H1 (cell line): ENCODE measurements at regions of chr20 and their contacts with region 1.

Region 1: GRCh38 chr20:33897313-33897912 is 86.3 kb downstream of the CHMP4B start:
- DNase-seq: no peak
- H3K4me3 ChIP-seq: no peak overlapping the region
- H3K27ac ChIP-seq: no peak overlapping the region
- H3K4me1 ChIP-seq: peaks cover 0 to 1% (median 0%) of the 10 kb centered on the region in 4 experiments; a peak in 2 of 7 replicates
- H3K27me3 ChIP-seq: no peaks in the 10 kb centered on the region
- CTCF ChIP-seq: peak; percentile 20 to 43 (median 42); a peak in 3 of 4 replicates
- EP300 ChIP-seq: no peak
- POLR2A ChIP-seq: no peak
- RAD21 ChIP-seq: 0 out of 4 replicates have a peak, but pooled peaks of 1 of the 2 experiments have one; percentile 3

Region 2: GRCh38 chr20:33874129-33874528 is 23.3 kb before region 1 on chr20:
- CTCF ChIA-PET with region 1: interaction called, 17 read pairs
- POLR2A ChIA-PET with region 1: no interaction called
- DNase-seq: no peak
- H3K4me3 ChIP-seq: no peak overlapping the region
- H3K27ac ChIP-seq: no peak overlapping the region
- H3K4me1 ChIP-seq: no peaks in the 10 kb centered on the region
- H3K27me3 ChIP-seq: no peaks in the 10 kb centered on the region
- CTCF ChIP-seq: no peak
- EP300 ChIP-seq: no peak
- POLR2A ChIP-seq: no peak
- RAD21 ChIP-seq: no peak

Region 3: GRCh38 chr20:33883164-33883563 is 14.2 kb before region 1 on chr20:
- CTCF ChIA-PET with region 1: interaction called, 17 read pairs
- POLR2A ChIA-PET with region 1: no interaction called
- DNase-seq: no peak
- H3K4me3 ChIP-seq: no peak overlapping the region
- H3K27ac ChIP-seq: no peak overlapping the region
- H3K4me1 ChIP-seq: no peaks in the 10 kb centered on the region
- H3K27me3 ChIP-seq: no peaks in the 10 kb centered on the region; a peak in 1 of 7 replicates
- CTCF ChIP-seq: no peak
- EP300 ChIP-seq: no peak
- POLR2A ChIP-seq: no peak
- RAD21 ChIP-seq: no peak

Region 4: DNA sequence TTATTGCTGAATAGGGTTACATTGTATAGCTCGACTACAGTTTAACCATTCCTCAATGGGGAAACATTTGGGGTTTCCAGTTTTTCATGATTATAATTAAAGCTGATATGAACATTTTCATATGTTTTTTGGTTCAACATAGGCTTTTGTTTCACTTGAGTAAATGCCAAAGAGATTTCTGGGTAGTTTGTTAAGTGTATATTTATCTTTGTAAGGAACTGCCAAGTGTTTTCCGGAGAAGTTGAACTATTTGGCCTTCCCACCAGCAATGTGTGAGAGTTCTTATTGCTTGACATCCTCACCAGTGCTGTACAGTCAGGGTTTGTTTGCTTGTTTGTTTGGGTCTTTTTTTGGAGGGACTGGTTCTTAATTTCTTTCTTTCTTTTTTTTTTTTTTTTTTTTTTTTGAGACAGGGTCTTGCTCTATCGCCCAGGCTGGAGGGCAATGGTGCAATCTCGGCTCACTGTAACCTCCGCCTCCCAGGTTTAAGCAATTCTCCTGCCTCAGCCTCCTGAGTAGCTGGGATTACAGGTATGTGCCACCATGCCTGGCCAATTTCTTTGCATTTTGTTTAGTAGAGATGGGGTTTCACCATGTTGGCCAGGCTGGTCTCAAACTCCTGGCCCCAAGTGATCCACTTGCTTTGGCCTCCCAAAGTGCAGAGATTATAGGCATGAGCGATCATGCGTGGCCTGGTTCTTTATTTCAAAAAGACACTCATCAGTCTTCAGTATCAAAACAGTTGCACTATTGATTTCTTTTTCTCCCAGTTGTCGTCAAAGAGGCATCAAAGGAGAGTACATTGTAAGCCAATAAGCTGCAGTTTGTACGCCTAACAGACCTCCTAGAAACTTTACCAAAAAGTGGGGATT is 12.9 kb after region 1 on chr20:
- CTCF ChIA-PET with region 1: interaction called, 24 read pairs
- POLR2A ChIA-PET with region 1: interaction called, 3 read pairs
- DNase-seq: no peak
- H3K4me3 ChIP-seq: no peak overlapping the region
- H3K27ac ChIP-seq: no peak overlapping the region
- H3K4me1 ChIP-seq: no peaks in the 10 kb centered on the region
- H3K27me3 ChIP-seq: no peaks in the 10 kb centered on the region
- CTCF ChIP-seq: no peak
- EP300 ChIP-seq: no peak
- POLR2A ChIP-seq: no peak
- RAD21 ChIP-seq: no peak

Region 5: GRCh38 chr20:33915726-33916331 is 18.4 kb after region 1 on chr20:
- CTCF ChIA-PET with region 1: interaction called, 24 read pairs
- POLR2A ChIA-PET with region 1: no interaction called
- DNase-seq: peak in 1 of 2 experiments; percentile 85
- H3K4me3 ChIP-seq: no peak overlapping the region
- H3K27ac ChIP-seq: no peak overlapping the region
- H3K4me1 ChIP-seq: no peaks in the 10 kb centered on the region
- H3K27me3 ChIP-seq: no peaks in the 10 kb centered on the region
- CTCF ChIP-seq: peak; percentile 76 to 92 (median 85)
- EP300 ChIP-seq: no peak
- POLR2A ChIP-seq: no peak
- RAD21 ChIP-seq: peak; percentile 50 to 66